H1 (cell line): ENCODE measurements at regions of chr6 and their contacts with region 1.

Region 1: GRCh38 chr6:158769771-158770432 is 49.3 kb downstream of the EZR start:
- DNase-seq: no peak
- H3K4me3 ChIP-seq: no peak overlapping the region
- H3K27ac ChIP-seq: no peak overlapping the region
- H3K4me1 ChIP-seq: peaks cover 0 to 5% (median 0%) of the 10 kb centered on the region in 4 experiments; a peak in 2 of 7 replicates
- H3K27me3 ChIP-seq: no peaks in the 10 kb centered on the region
- CTCF ChIP-seq: no peak
- EP300 ChIP-seq: no peak
- POLR2A ChIP-seq: no peak
- RAD21 ChIP-seq: no peak

Region 2: GRCh38 chr6:158536084-158536890 is 233.6 kb before region 1 on chr6:
- CTCF ChIA-PET with region 1: no interaction called
- POLR2A ChIA-PET with region 1: no interaction called
- DNase-seq: peak in 1 of 2 experiments; percentile 92
- H3K4me3 ChIP-seq: peak overlapping the region; percentile 77 to 96 (median 80)
- H3K27ac ChIP-seq: peak overlapping the region; percentile 20; the same call in 1 of the 2 replicates
- H3K4me1 ChIP-seq: peaks cover 2 to 3% (median 2%) of the 10 kb centered on the region in 4 experiments; a peak in 2 of 7 replicates
- H3K27me3 ChIP-seq: peaks cover 0 to 3% (median 1%) of the 10 kb centered on the region in 4 experiments; a peak in 3 of 7 replicates
- CTCF ChIP-seq: no peak
- EP300 ChIP-seq: no peak
- POLR2A ChIP-seq: no peak; a peak in 1 of 3 replicates
- RAD21 ChIP-seq: no peak; a peak in 1 of 4 replicates

Region 3: GRCh38 chr6:158638324-158638854 is 131.5 kb before region 1 on chr6:
- CTCF ChIA-PET with region 1: no interaction called
- POLR2A ChIA-PET with region 1: no interaction called
- DNase-seq: peak in 1 of 2 experiments; percentile 29
- H3K4me3 ChIP-seq: no peak overlapping the region
- H3K27ac ChIP-seq: no peak overlapping the region
- H3K4me1 ChIP-seq: peaks cover 0 to 4% (median 1%) of the 10 kb centered on the region in 4 experiments; a peak in 1 of 7 replicates
- H3K27me3 ChIP-seq: no peaks in the 10 kb centered on the region
- CTCF ChIP-seq: no peak
- EP300 ChIP-seq: no peak
- POLR2A ChIP-seq: no peak
- RAD21 ChIP-seq: no peak

Region 4: DNA sequence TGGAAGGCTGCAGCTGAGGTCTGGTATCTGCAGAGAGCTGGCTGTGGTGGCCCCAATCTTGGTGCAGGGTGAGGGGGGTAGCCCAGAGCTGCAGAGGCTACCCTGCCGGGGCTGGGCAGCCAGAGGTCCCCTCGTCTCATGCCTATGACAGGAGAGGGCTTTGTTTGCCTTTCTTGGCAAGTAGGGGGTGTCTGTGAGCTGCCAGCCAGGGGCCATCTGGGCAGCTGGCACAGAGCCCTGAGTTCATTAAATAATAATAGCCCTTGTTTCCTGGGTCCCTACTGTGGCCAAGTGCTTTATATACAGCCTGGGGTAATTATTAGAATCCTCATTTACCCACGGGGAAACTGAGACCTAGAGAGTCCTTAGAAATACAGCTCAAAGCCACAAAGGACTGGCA is 17.3 kb before region 1 on chr6:
- CTCF ChIA-PET with region 1: interaction called, 13 read pairs
- POLR2A ChIA-PET with region 1: interaction called, 11 read pairs
- DNase-seq: no peak
- H3K4me3 ChIP-seq: no peak overlapping the region
- H3K27ac ChIP-seq: no peak overlapping the region
- H3K4me1 ChIP-seq: peaks cover 0 to 7% (median under 1%) of the 10 kb centered on the region in 4 experiments; a peak in 3 of 7 replicates
- H3K27me3 ChIP-seq: no peaks in the 10 kb centered on the region; a peak in 2 of 7 replicates
- CTCF ChIP-seq: peak; percentile 29 to 39 (median 30)
- EP300 ChIP-seq: no peak
- POLR2A ChIP-seq: no peak
- RAD21 ChIP-seq: peak; percentile 46 to 54

Region 5: GRCh38 chr6:158758451-158758861 is 11.4 kb before region 1 on chr6:
- CTCF ChIA-PET with region 1: interaction called, 13 read pairs
- POLR2A ChIA-PET with region 1: interaction called, 10 read pairs
- DNase-seq: peak; percentile 34 to 71
- H3K4me3 ChIP-seq: no peak overlapping the region
- H3K27ac ChIP-seq: no peak overlapping the region
- H3K4me1 ChIP-seq: peaks cover 0 to 20% (median 10%) of the 10 kb centered on the region in 4 experiments; a peak in 6 of 7 replicates
- H3K27me3 ChIP-seq: no peaks in the 10 kb centered on the region
- CTCF ChIP-seq: no peak
- EP300 ChIP-seq: no peak
- POLR2A ChIP-seq: no peak
- RAD21 ChIP-seq: no peak

Region 6: DNA sequence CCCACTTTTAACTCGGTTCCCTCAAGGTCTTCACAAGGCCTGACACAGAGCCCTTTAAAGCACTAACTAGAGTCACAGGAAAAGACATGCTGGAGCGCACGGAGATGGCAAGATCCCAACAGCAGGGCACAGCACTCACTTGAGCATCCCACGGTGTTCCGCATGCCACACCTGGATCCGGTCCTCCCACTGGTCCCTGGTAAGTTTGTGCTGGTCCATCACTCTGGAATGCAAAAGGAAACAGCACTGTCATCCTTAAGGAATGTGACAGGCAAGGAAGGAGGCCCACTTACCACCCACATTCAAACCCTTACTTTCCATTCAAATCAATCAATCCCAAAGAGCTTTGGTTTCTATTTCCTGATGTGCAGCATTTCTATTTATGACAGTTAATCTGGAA is 14.6 kb after region 1 on chr6:
- CTCF ChIA-PET with region 1: interaction called, 19 read pairs
- POLR2A ChIA-PET with region 1: interaction called, 75 read pairs
- DNase-seq: no peak
- H3K4me3 ChIP-seq: no peak overlapping the region
- H3K27ac ChIP-seq: no peak overlapping the region
- H3K4me1 ChIP-seq: peaks cover 0 to 2% (median under 1%) of the 10 kb centered on the region in 4 experiments; a peak in 2 of 7 replicates
- H3K27me3 ChIP-seq: no peaks in the 10 kb centered on the region
- CTCF ChIP-seq: no peak
- EP300 ChIP-seq: no peak
- POLR2A ChIP-seq: no peak
- RAD21 ChIP-seq: no peak

Region 7: DNA sequence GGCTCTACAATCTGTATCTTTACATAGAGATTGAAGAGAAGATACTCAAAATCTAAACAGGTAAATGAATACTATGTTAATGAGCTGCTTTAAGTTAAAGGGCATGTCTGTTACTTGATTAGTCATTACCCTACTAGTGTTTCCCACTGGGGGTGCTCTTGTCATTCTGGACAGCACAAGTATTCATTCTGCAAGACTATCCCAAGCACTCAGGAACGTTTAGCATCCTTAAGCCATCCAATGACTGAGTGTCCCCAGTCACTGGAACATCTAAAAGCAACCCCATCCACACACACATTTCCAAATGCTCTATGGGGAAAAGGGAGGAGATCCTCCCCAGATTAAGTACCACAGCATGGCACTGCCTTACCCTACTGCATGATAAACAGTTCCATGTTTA is 23.5 kb after region 1 on chr6:
- CTCF ChIA-PET with region 1: interaction called, 4 read pairs
- POLR2A ChIA-PET with region 1: interaction called, 14 read pairs
- DNase-seq: no peak
- H3K4me3 ChIP-seq: no peak overlapping the region
- H3K27ac ChIP-seq: no peak overlapping the region
- H3K4me1 ChIP-seq: peaks cover 0 to 9% (median 5%) of the 10 kb centered on the region in 4 experiments; a peak in 6 of 7 replicates
- H3K27me3 ChIP-seq: no peaks in the 10 kb centered on the region
- CTCF ChIP-seq: peak in 2 of 3 experiments; percentile 30 to 57; a peak in 3 of 4 replicates
- EP300 ChIP-seq: no peak
- POLR2A ChIP-seq: no peak
- RAD21 ChIP-seq: peak; percentile 66 to 72

Region 8: DNA sequence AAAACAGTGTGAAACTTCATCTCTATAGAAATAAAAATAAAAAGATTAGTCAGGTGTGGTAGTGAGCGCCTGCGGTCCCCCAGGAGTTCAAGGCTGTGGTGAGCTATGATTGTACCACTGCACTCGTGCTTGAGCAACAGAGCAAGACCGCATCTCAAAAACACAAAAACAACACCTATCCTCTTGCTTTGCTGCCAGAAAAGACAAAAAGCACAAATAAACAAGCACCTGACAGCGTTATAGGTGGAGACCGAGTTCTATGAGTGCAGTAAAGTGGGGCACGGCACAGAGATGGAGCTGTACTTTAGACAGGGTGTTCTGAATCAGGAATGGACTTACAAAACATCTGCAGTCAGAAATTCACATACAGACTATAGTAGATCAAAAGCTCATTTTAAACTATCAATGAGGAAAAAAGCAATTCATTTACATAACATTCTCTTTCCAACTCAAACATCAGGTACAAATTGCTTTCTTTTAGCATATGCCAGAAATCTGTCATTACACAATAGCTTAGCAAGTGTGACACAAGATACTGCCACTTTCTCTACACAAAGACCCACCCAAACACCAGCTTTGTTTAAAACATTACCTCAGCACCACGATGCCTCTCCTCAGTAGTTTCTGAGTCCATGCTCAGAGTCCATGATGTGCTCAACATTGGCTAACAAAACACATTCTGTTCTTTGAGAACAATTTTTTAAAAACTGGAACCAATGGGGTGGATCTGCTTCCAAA is 39.2 kb after region 1 on chr6:
- CTCF ChIA-PET with region 1: interaction called, 4 read pairs
- POLR2A ChIA-PET with region 1: interaction called, 10 read pairs
- DNase-seq: no peak
- H3K4me3 ChIP-seq: no peak overlapping the region
- H3K27ac ChIP-seq: no peak overlapping the region
- H3K4me1 ChIP-seq: peaks cover 11 to 41% (median 37%) of the 10 kb centered on the region in 4 experiments
- H3K27me3 ChIP-seq: no peaks in the 10 kb centered on the region
- CTCF ChIP-seq: no peak
- EP300 ChIP-seq: no peak
- POLR2A ChIP-seq: no peak
- RAD21 ChIP-seq: no peak

Region 9: GRCh38 chr6:158900663-158901341 is 130.9 kb after region 1 on chr6:
- CTCF ChIA-PET with region 1: no interaction called
- POLR2A ChIA-PET with region 1: no interaction called
- DNase-seq: no peak
- H3K4me3 ChIP-seq: no peak overlapping the region
- H3K27ac ChIP-seq: no peak overlapping the region
- H3K4me1 ChIP-seq: no peaks in the 10 kb centered on the region; a peak in 1 of 7 replicates
- H3K27me3 ChIP-seq: no peaks in the 10 kb centered on the region
- CTCF ChIP-seq: no peak
- EP300 ChIP-seq: no peak
- POLR2A ChIP-seq: no peak
- RAD21 ChIP-seq: no peak